Tibial artery (tissue), 4 donors: ENCODE measurements at regions of chr2 and their contacts with region 1.

Region 1: GRCh38 chr2:238462782-238463396 is 36.2 kb downstream of the ASB1 start:
- DNase-seq: no peak
- H3K4me3 ChIP-seq: no peak overlapping the region
- H3K27ac ChIP-seq: no peak overlapping the region
- H3K4me1 ChIP-seq: peaks cover 0 to 31% (median 17%) of the 10 kb centered on the region in 4 donors
- H3K27me3 ChIP-seq: no peaks in the 10 kb centered on the region
- CTCF ChIP-seq: peak; percentile 63 to 84

Region 2: DNA sequence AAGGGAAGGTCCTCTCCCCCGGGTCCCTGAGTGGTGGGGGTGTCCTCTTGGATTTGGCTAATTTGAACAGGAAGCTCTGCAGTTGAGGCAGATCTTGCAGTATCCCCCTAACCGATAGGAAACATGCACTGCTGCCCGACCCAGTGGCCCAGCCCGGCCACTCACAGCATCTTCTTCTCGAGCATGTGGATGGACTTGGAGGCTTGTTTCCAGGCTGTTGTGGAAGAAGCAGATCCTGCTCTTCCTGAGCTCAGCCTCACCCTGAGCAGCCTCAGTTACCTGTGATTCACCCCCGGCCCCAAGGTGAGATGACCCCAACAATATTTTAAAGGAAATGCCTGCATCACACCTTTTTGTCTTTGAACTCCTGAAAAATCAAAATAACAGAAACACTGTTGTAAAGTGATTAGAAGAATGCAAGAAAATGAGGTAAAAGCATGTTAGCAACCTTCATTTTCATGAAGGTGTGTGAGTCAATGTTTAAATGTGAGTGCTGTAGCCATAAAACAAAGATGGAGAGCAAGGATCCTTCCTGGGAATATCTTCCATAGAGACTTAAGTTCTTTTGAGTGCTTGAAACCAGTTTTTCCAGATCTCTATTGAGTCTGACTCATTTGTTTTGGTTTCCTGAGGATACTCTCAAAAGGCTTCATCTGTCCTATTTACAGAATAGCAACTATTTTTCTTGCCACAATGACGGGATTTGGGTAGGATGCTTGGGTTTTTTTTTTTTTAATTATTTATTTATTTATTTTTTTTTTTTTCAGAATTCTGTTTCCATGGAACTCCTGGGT is 82.3 kb before region 1 on chr2:
- intact Hi-C with region 1: loop called (anchors 5 kb)
- DNase-seq: no peak
- H3K4me3 ChIP-seq: no peak overlapping the region
- H3K27ac ChIP-seq: peak overlapping the region in 1 of 2 donors; percentile 8
- H3K4me1 ChIP-seq: peaks cover 0 to 35% (median 26%) of the 10 kb centered on the region in 4 donors
- H3K27me3 ChIP-seq: no peaks in the 10 kb centered on the region
- CTCF ChIP-seq: no peak